ENCODE measurements at regions of chr2 and their contacts with region 1.

Region 1: GRCh38 chr2:30165050-30165520 is 18.3 kb downstream of the YPEL5 start:
- DNase-seq: peak in 13 of 14 experiments; percentile 23 to 90 (median 50)
- ATAC-seq: peak; percentile 76
- H3K4me3 ChIP-seq: no peak overlapping the region
- H3K4me3 Mint-ChIP-seq: no peak overlapping the region
- H3K27ac ChIP-seq: no peak overlapping the region
- H3K27ac Mint-ChIP-seq: peak overlapping the region; percentile 74
- H3K4me1 ChIP-seq: no peaks in the 10 kb centered on the region
- H3K4me1 Mint-ChIP-seq: peaks cover 18% of the 10 kb centered on the region
- H3K27me3 ChIP-seq: no peaks in the 10 kb centered on the region
- H3K27me3 Mint-ChIP-seq: no peaks in the 10 kb centered on the region
- CTCF ChIP-seq: peak; percentile 97

Region 2: GRCh38 chr2:29700560-29700959 is 464.5 kb before region 1 on chr2:
- CTCF ChIA-PET with region 1: no interaction called
- POLR2A ChIA-PET with region 1: no interaction called
- intact Hi-C with region 1: no loop called
- DNase-seq: no peak
- ATAC-seq: no peak
- H3K4me3 ChIP-seq: no peak overlapping the region
- H3K4me3 Mint-ChIP-seq: no peak overlapping the region
- H3K27ac ChIP-seq: no peak overlapping the region
- H3K27ac Mint-ChIP-seq: no peak overlapping the region
- H3K4me1 ChIP-seq: no peaks in the 10 kb centered on the region
- H3K4me1 Mint-ChIP-seq: no peaks in the 10 kb centered on the region
- H3K27me3 ChIP-seq: no peaks in the 10 kb centered on the region
- H3K27me3 Mint-ChIP-seq: no peaks in the 10 kb centered on the region
- CTCF ChIP-seq: no peak

Region 3: GRCh38 chr2:30139131-30139870 is 25.8 kb before region 1 on chr2:
- CTCF ChIA-PET with region 1: interaction called, 24 read pairs
- POLR2A ChIA-PET with region 1: interaction called, 5 read pairs
- intact Hi-C with region 1: no loop called
- DNase-seq: peak in 8 of 14 experiments; percentile 8 to 73 (median 36)
- ATAC-seq: peak; percentile 85
- H3K4me3 ChIP-seq: no peak overlapping the region
- H3K4me3 Mint-ChIP-seq: peak overlapping the region; percentile 20
- H3K27ac ChIP-seq: no peak overlapping the region
- H3K27ac Mint-ChIP-seq: peak overlapping the region; percentile 57
- H3K4me1 ChIP-seq: peaks cover 8% of the 10 kb centered on the region
- H3K4me1 Mint-ChIP-seq: peaks cover 24% of the 10 kb centered on the region
- H3K27me3 ChIP-seq: no peaks in the 10 kb centered on the region
- H3K27me3 Mint-ChIP-seq: peaks cover 11% of the 10 kb centered on the region
- CTCF ChIP-seq: no peak

Region 4: DNA sequence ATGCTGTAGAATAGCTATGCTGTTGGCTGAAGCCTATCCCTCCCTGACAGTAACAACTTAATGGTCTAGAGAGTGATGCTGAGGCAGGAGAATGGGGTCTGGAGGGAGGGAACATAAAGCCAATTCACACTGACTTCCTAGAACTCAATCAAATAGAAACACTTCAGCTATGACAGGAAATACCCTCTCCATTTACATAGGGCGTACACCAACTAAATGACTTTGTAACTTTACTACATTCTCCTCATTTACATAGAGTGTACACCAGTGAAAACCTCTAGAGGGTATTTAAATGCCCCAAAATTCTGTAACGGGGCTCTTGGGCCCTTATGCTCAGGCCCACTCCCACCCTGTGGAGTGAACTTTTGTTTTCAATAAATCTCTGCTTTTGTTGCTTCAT is 23.2 kb after region 1 on chr2:
- CTCF ChIA-PET with region 1: no interaction called
- POLR2A ChIA-PET with region 1: no interaction called
- intact Hi-C with region 1: no loop called
- DNase-seq: no peak
- ATAC-seq: no peak
- H3K4me3 ChIP-seq: no peak overlapping the region
- H3K4me3 Mint-ChIP-seq: no peak overlapping the region
- H3K27ac ChIP-seq: no peak overlapping the region
- H3K27ac Mint-ChIP-seq: no peak overlapping the region
- H3K4me1 ChIP-seq: no peaks in the 10 kb centered on the region
- H3K4me1 Mint-ChIP-seq: no peaks in the 10 kb centered on the region
- H3K27me3 ChIP-seq: no peaks in the 10 kb centered on the region
- H3K27me3 Mint-ChIP-seq: no peaks in the 10 kb centered on the region
- CTCF ChIP-seq: no peak

Region 5: DNA sequence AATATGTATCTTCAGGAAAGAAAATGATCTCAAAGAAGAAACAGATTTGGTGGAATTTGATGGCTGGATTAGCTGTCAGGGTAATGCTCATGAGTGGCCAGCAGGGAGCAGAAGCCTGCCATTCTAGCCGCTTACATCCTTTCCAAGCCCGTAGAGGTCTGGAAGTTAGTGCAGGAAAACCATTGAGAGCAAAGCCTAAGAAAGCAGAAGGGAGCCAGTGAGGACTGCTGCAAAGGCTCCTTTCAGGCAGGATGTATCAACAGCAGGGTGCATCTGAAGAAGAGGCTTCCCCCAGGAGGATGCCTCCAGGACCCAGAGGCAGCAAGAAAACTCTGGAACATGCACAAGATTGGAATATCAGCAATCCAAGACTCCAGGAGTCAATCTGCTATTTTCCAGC is 43.4 kb after region 1 on chr2:
- CTCF ChIA-PET with region 1: interaction called, 12 read pairs
- POLR2A ChIA-PET with region 1: interaction called, 22 read pairs
- intact Hi-C with region 1: loop called in 1 of 2 experiments (anchors 2 kb)
- DNase-seq: peak in 10 of 14 experiments; percentile 16 to 74 (median 33)
- ATAC-seq: peak; percentile 58
- H3K4me3 ChIP-seq: no peak overlapping the region
- H3K4me3 Mint-ChIP-seq: peak overlapping the region; percentile 42
- H3K27ac ChIP-seq: peak overlapping the region in 1 of 2 donors; percentile 9
- H3K27ac Mint-ChIP-seq: peak overlapping the region; percentile 82
- H3K4me1 ChIP-seq: peaks cover 21% of the 10 kb centered on the region
- H3K4me1 Mint-ChIP-seq: peaks cover 31% of the 10 kb centered on the region
- H3K27me3 ChIP-seq: no peaks in the 10 kb centered on the region
- H3K27me3 Mint-ChIP-seq: no peaks in the 10 kb centered on the region
- CTCF ChIP-seq: peak; percentile 96

Region 6: GRCh38 chr2:30239308-30239985 is 74.4 kb after region 1 on chr2:
- CTCF ChIA-PET with region 1: interaction called, 24 read pairs
- POLR2A ChIA-PET with region 1: interaction called, 13 read pairs
- intact Hi-C with region 1: loop called in 1 of 2 experiments (anchors 5 kb)
- DNase-seq: peak; percentile 49 to 91 (median 71)
- ATAC-seq: peak; percentile 79
- H3K4me3 ChIP-seq: peak overlapping the region; percentile 12
- H3K4me3 Mint-ChIP-seq: peak overlapping the region; percentile 82
- H3K27ac ChIP-seq: peak overlapping the region in 1 of 2 donors; percentile 42
- H3K27ac Mint-ChIP-seq: peak overlapping the region; percentile 99
- H3K4me1 ChIP-seq: peaks cover 89% of the 10 kb centered on the region
- H3K4me1 Mint-ChIP-seq: peaks cover 96% of the 10 kb centered on the region
- H3K27me3 ChIP-seq: no peaks in the 10 kb centered on the region
- H3K27me3 Mint-ChIP-seq: no peaks in the 10 kb centered on the region
- CTCF ChIP-seq: peak; percentile 85

Region 7: DNA sequence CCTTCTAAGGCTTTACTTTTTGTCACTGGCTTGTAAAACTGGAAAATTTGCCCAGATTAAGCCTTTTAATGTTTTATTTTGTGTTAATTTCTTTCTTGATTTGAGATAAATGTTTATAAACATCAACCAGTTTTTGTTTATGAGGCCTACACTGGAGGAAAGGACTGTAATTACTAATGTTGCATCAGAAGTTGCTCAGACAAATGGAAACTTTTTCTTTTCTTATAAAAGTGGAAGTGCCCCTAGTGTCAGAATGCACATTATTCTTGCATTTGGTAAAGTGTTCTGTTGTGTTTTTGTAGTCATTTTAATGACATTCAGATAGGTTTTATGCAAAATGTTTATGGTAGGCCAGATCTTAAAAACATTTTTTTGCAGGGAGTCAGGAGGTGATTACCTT is 307.2 kb after region 1 on chr2:
- CTCF ChIA-PET with region 1: no interaction called
- POLR2A ChIA-PET with region 1: interaction called, 4 read pairs
- intact Hi-C with region 1: loop called (anchors 1 to 5 kb)
- DNase-seq: peak in 1 of 14 experiments; percentile 9
- ATAC-seq: no peak
- H3K4me3 ChIP-seq: no peak overlapping the region
- H3K4me3 Mint-ChIP-seq: no peak overlapping the region
- H3K27ac ChIP-seq: no peak overlapping the region
- H3K27ac Mint-ChIP-seq: no peak overlapping the region
- H3K4me1 ChIP-seq: no peaks in the 10 kb centered on the region
- H3K4me1 Mint-ChIP-seq: peaks cover 49% of the 10 kb centered on the region
- H3K27me3 ChIP-seq: no peaks in the 10 kb centered on the region
- H3K27me3 Mint-ChIP-seq: no peaks in the 10 kb centered on the region
- CTCF ChIP-seq: no peak

Region 8: GRCh38 chr2:31170071-31170698 is 1005.1 kb after region 1 on chr2:
- CTCF ChIA-PET with region 1: no interaction called
- POLR2A ChIA-PET with region 1: no interaction called
- intact Hi-C with region 1: loop called in 1 of 2 experiments (anchors 5 kb)
- DNase-seq: peak in 12 of 14 experiments; percentile 9 to 73 (median 32)
- ATAC-seq: peak; percentile 54
- H3K4me3 ChIP-seq: no peak overlapping the region
- H3K4me3 Mint-ChIP-seq: no peak overlapping the region
- H3K27ac ChIP-seq: no peak overlapping the region
- H3K27ac Mint-ChIP-seq: no peak overlapping the region
- H3K4me1 ChIP-seq: no peaks in the 10 kb centered on the region
- H3K4me1 Mint-ChIP-seq: peaks cover 4% of the 10 kb centered on the region
- H3K27me3 ChIP-seq: no peaks in the 10 kb centered on the region
- H3K27me3 Mint-ChIP-seq: no peaks in the 10 kb centered on the region
- CTCF ChIP-seq: peak; percentile 73

Region 9: DNA sequence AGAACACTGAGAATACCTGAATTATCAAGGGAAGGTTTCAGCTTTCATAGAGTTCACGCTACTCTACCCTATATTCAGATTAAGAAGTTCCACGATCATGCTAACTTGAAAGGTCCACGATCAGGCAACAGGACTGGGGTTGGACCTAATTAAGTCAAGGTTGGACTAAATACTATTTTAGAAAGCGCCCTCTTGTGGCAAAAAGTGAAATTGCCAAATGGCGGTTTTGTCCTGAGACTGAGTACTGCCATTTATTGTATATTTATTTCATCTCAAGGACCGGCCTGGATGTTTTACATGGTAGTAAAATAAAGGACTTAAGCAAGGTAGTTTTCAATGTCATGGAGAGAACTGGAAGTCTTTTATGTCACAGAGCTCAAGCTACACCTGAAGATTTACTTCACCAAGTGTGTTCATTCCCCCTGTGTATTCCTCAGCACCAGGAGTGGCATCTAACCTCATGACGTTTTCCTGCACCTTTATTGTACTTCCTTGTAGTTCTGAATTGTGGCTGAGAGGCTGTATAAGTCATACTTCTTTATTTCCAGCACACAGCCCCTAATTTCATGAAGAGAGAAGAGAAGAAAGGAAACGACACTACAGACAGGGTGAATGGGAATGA is 1358.9 kb after region 1 on chr2:
- CTCF ChIA-PET with region 1: no interaction called
- POLR2A ChIA-PET with region 1: no interaction called
- intact Hi-C with region 1: loop called in 1 of 2 experiments (anchors 10 kb)
- DNase-seq: peak; percentile 3 to 58 (median 32)
- ATAC-seq: no peak
- H3K4me3 ChIP-seq: no peak overlapping the region
- H3K4me3 Mint-ChIP-seq: no peak overlapping the region
- H3K27ac ChIP-seq: no peak overlapping the region
- H3K27ac Mint-ChIP-seq: no peak overlapping the region
- H3K4me1 ChIP-seq: no peaks in the 10 kb centered on the region
- H3K4me1 Mint-ChIP-seq: no peaks in the 10 kb centered on the region
- H3K27me3 ChIP-seq: peaks cover 0 to 9% of the 10 kb centered on the region in 2 experiments
- H3K27me3 Mint-ChIP-seq: peaks cover 28% of the 10 kb centered on the region
- CTCF ChIP-seq: peak; percentile 88